Gastrocnemius medialis (tissue), 4 donors: ENCODE measurements at regions of chr17 and their contacts with region 1.

Region 1: DNA sequence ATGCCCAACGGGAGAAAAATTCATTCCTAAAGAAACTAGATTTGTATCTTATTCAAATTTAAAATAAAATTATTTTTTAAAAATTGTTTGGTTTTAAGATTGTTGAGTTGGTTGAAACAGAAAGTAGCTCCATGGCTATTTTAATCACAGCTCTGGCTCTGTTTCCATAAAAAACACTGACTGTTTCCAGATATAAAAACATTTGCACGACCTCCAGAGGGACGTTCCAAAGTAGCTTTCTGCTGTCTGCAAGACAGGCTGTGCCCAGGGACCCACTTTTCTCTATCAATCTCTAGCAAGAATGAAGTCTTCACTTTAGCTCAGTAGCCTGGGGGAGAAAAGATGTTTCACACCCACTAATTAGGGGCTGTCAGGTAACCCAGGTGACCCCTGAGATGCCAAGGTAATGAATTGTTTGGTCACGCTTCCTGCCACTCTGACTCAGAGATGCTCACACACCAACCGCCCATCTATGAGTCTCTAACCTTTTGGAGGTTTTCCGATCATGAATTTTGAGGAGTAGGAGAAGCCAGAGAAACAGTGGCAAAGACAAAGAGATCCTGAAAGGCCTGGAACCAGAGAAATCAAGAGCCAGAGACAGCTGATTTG is 220.1 kb upstream of the SOX9 start:
- DNase-seq: no peak
- ATAC-seq: no peak
- H3K4me3 ChIP-seq: no peak overlapping the region
- H3K27ac ChIP-seq: no peak overlapping the region
- H3K4me1 ChIP-seq: no peaks in the 10 kb centered on the region
- H3K27me3 ChIP-seq: no peaks in the 10 kb centered on the region
- CTCF ChIP-seq: no peak
- POLR2A ChIP-seq: no peak

Region 2: GRCh38 chr17:72030067-72030899 is 129.6 kb after region 1 on chr17:
- in situ Hi-C with region 1: no loop called
- intact Hi-C with region 1: loop called (anchors 10 kb)
- DNase-seq: peak in 1 of 2 donors; percentile 15
- ATAC-seq: peak; percentile 47 to 66
- H3K4me3 ChIP-seq: peak overlapping the region; percentile 36 to 61 (median 50)
- H3K27ac ChIP-seq: no peak overlapping the region
- H3K4me1 ChIP-seq: no peaks in the 10 kb centered on the region
- H3K27me3 ChIP-seq: peaks cover 0 to 14% (median 0%) of the 10 kb centered on the region in 3 donors
- CTCF ChIP-seq: peak in 3 of 5 experiments; percentile 22 to 45 (median 31)
- POLR2A ChIP-seq: no peak